Mammary epithelial cell (primary cell): ENCODE measurements at regions of chr19 and their contacts with region 1.

Region 1: DNA sequence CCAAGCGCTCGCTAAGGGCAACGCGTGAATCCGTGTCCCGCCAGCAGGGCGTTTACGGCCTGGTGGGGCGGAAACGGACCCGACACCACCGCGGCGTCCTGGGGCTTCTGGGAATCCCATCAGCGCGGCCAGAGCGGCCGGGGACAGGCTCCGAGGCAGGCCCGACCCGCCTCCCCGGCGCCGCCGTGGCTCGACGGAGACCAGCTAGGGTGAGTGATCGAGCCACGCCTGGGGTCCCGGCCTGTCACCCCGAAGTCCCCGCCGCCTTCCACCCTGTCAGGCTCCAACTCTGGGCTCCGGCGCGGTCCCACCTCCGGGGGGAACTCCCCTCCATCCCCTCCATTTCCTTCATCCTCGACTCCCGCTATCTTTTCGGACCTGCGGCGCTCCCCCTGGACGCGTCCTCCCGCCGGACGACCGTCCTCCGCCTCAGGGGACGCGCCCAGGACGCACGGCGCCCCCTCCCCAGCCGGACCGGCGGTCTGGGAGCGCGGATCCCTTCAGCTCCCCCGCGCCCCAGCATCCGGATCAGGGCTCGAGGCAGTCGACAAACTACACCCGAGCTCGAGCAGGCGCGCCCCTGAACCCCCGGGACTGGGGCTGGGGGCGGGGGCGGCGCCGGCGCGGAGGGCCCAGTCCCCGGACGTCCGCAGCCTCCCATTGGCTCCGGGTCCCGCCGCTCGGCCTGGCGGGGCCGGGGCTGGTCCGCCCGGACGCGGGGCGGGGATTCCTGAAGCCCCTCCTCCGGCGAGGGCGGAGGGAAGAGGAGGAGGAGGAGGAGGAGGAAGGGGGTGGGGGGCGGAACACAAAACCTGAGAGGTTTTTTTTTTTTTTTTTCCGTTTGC is 638 bp upstream of the BICRA start:
- DNase-seq: peak; percentile 94
- H3K4me3 ChIP-seq: peak overlapping the region; percentile 92 to 99 (median 98)
- H3K27ac ChIP-seq: peak overlapping the region; percentile 85
- H3K4me1 ChIP-seq: peaks cover 12% of the 10 kb centered on the region
- H3K27me3 ChIP-seq: no peaks in the 10 kb centered on the region
- CTCF ChIP-seq: peak in 1 of 2 donors; percentile 28

Region 2: GRCh38 chr19:46812977-46813838 is 795.1 kb before region 1 on chr19:
- CTCF ChIA-PET with region 1: no interaction called
- dilution Hi-C with region 1: no loop called
- in situ Hi-C with region 1: no loop called
- intact Hi-C with region 1: no loop called
- DNase-seq: no peak
- H3K4me3 ChIP-seq: no peak overlapping the region
- H3K27ac ChIP-seq: no peak overlapping the region
- H3K4me1 ChIP-seq: no peaks in the 10 kb centered on the region
- H3K27me3 ChIP-seq: no peaks in the 10 kb centered on the region
- CTCF ChIP-seq: no peak

Region 3: DNA sequence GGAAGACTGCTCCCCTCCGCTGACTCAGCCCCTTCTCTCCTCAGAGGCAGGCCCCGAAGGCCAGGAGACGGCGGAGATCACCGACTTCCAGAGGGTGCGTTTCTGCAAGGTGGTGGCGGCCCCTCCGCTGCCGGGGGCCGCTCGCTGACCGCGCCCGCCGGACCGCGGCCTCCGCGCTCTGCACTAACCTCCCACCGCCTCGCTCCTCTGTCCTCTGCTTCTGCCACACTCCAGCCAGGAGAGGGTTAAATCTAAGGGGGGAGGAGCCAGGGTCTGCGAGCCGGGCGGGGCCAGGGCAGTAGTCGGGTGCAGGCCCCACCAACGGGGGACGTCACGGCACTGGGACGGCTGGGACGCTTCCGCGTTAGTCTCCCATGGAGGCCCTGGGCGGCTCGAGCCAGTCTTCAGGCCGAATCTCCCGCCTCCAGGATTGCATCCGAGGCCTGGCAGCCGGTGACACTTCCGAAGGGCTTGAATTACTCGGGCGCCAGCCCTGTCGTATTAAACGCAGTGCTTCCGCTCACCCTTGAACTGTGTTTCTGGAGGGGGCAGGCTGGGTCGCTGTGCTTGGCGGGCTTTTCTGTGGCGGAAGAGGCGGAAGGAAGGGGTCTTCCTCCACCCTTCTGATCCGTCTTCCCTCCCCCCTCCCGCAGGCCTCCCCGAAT is 334.9 kb before region 1 on chr19:
- CTCF ChIA-PET with region 1: no interaction called
- dilution Hi-C with region 1: loop called (anchors 10 kb)
- in situ Hi-C with region 1: no loop called
- intact Hi-C with region 1: no loop called
- DNase-seq: peak; percentile 85
- H3K4me3 ChIP-seq: peak overlapping the region; percentile 58 to 81 (median 73)
- H3K27ac ChIP-seq: peak overlapping the region; percentile 89
- H3K4me1 ChIP-seq: peaks cover 14% of the 10 kb centered on the region
- H3K27me3 ChIP-seq: no peaks in the 10 kb centered on the region
- CTCF ChIP-seq: no peak

Region 4: DNA sequence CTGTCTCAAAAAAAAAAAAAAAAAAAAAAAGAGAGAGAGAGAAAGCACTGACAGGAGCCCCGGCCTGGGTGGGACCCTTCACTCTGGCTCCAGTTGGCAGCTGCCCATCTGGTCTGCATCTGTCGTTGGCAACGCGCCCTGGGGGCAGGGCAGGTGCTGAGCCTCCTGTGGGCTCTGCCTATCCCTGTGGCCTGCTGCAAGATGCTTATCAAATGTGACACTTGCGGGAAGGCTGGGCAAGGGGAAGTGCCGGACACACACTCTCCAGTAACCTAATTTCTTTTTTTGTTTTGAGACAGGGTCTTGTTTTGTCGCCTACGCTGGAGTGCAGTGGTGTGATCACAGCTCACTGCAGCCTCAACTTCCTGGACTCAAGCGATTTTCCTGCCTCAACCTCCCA is 113.6 kb before region 1 on chr19:
- CTCF ChIA-PET with region 1: no interaction called
- dilution Hi-C with region 1: loop called (anchors 5 kb)
- in situ Hi-C with region 1: no loop called
- intact Hi-C with region 1: no loop called
- DNase-seq: no peak
- H3K4me3 ChIP-seq: no peak overlapping the region
- H3K27ac ChIP-seq: no peak overlapping the region
- H3K4me1 ChIP-seq: no peaks in the 10 kb centered on the region
- H3K27me3 ChIP-seq: no peaks in the 10 kb centered on the region
- CTCF ChIP-seq: no peak

Region 5: DNA sequence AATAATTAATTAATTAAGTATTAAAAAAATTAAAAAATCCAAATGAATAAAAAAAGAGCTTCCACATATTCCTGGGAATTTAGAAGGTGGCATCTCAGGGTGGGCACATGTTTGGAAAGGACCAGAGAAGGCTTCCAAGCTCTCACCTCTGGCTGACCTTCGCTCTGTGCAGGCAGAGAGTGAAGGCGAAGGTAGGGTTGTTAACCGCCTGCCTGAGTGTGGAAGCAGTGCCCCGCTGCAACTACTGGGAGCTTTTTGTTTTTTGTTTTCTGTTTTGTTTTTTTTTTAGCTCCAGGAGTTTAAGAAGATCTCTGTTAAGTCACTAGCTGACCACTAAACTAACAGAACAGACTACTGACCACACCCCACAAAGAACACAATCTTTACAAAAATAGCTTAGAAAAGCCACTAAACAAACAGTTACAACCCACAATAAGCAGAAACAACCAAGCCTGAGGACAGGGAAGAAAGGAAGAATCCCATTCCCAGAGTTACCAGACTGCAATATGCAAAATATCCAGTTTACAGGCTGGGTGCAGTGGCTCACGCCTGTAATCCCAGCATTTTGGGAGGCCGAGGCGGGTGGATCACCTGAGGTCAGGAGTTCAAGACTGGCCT is 46.7 kb before region 1 on chr19:
- CTCF ChIA-PET with region 1: no interaction called
- dilution Hi-C with region 1: loop called (anchors 5 kb)
- in situ Hi-C with region 1: no loop called
- intact Hi-C with region 1: no loop called
- DNase-seq: no peak
- H3K4me3 ChIP-seq: no peak overlapping the region
- H3K27ac ChIP-seq: no peak overlapping the region
- H3K4me1 ChIP-seq: peaks cover 3% of the 10 kb centered on the region
- H3K27me3 ChIP-seq: no peaks in the 10 kb centered on the region
- CTCF ChIP-seq: no peak

Region 6: GRCh38 chr19:47682939-47683338 is 74.6 kb after region 1 on chr19:
- CTCF ChIA-PET with region 1: no interaction called
- dilution Hi-C with region 1: loop called (anchors 5 kb)
- in situ Hi-C with region 1: no loop called
- intact Hi-C with region 1: no loop called
- DNase-seq: no peak
- H3K4me3 ChIP-seq: no peak overlapping the region
- H3K27ac ChIP-seq: no peak overlapping the region
- H3K4me1 ChIP-seq: no peaks in the 10 kb centered on the region
- H3K27me3 ChIP-seq: no peaks in the 10 kb centered on the region
- CTCF ChIP-seq: no peak